ENCODE measurements at regions of chr2 and their contacts with region 1.

Region 1: GRCh38 chr2:75157430-75157829 is 41.9 kb downstream of the TACR1 start:
- DNase-seq: no peak
- H3K4me3 ChIP-seq: no peak overlapping the region
- H3K4me3 Mint-ChIP-seq: no peak overlapping the region
- H3K27ac Mint-ChIP-seq: no peak overlapping the region
- H3K4me1 ChIP-seq: peaks cover 20% of the 10 kb centered on the region
- H3K4me1 Mint-ChIP-seq: peaks cover 8% of the 10 kb centered on the region
- H3K27me3 ChIP-seq: no peaks in the 10 kb centered on the region
- H3K27me3 Mint-ChIP-seq: peaks cover 6% of the 10 kb centered on the region
- CTCF ChIP-seq: peak in 1 of 2 experiments; percentile 5

Region 2: GRCh38 chr2:75076088-75076487 is 81.3 kb before region 1 on chr2:
- CTCF ChIA-PET with region 1: no interaction called
- POLR2A ChIA-PET with region 1: no interaction called
- intact Hi-C with region 1: no loop called
- DNase-seq: no peak
- H3K4me3 ChIP-seq: no peak overlapping the region
- H3K4me3 Mint-ChIP-seq: no peak overlapping the region
- H3K27ac Mint-ChIP-seq: no peak overlapping the region
- H3K4me1 ChIP-seq: no peaks in the 10 kb centered on the region
- H3K4me1 Mint-ChIP-seq: no peaks in the 10 kb centered on the region
- H3K27me3 ChIP-seq: no peaks in the 10 kb centered on the region; the same call in 1 of the 2 replicates
- H3K27me3 Mint-ChIP-seq: no peaks in the 10 kb centered on the region
- CTCF ChIP-seq: no peak

Region 3: GRCh38 chr2:75098856-75099255 is 58.6 kb before region 1 on chr2:
- CTCF ChIA-PET with region 1: no interaction called
- POLR2A ChIA-PET with region 1: no interaction called
- intact Hi-C with region 1: loop called (anchors 2 kb)
- DNase-seq: peak in 1 of 2 experiments; percentile 30
- H3K4me3 ChIP-seq: no peak overlapping the region
- H3K4me3 Mint-ChIP-seq: no peak overlapping the region
- H3K27ac Mint-ChIP-seq: no peak overlapping the region
- H3K4me1 ChIP-seq: peaks cover 13% of the 10 kb centered on the region
- H3K4me1 Mint-ChIP-seq: peaks cover 34% of the 10 kb centered on the region
- H3K27me3 ChIP-seq: no peaks in the 10 kb centered on the region
- H3K27me3 Mint-ChIP-seq: no peaks in the 10 kb centered on the region
- CTCF ChIP-seq: peak; percentile 44 to 51

Region 4: DNA sequence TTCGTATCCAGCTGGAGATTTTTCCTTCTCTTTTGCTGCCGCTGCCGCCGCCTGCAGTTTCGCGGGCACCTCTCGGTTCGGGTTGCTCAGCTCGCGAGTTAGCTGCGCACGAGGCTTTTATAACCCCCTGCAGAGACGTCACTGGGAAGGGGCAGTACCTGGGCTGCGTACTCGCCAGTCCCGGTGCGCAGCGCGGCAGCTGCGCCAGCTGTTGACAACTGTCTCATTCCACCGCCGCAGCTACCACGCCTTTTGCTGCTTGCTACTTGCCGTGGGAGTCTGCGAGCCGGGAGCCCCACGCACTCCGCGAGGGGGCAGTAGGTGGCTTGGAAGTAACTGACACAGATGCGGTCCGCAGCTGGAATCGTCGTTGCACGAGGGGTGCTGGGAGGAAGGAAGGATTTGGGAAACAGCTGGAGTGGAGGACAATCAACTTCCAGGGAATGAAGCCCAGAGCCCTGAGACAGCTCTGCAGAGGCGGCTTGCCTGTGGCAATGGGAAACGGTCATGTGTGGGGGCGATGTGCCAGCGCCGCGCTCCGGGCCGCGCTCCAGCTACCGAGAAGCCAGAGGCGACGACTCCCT is 42.1 kb after region 1 on chr2 and contains the start of gene TACR1:
- CTCF ChIA-PET with region 1: interaction called, 3 read pairs
- POLR2A ChIA-PET with region 1: no interaction called
- intact Hi-C with region 1: loop called (anchors 5 kb)
- DNase-seq: peak; percentile 76 to 78
- H3K4me3 ChIP-seq: peak within 1 kb of the TSS; percentile 21
- H3K4me3 Mint-ChIP-seq: peak within 1 kb of the TSS; percentile 75
- H3K27ac Mint-ChIP-seq: no peak within 1 kb of the TSS
- H3K4me1 ChIP-seq: peaks cover 15% of the 10 kb centered on the region; the same call in 1 of the 2 replicates
- H3K4me1 Mint-ChIP-seq: peaks cover 6% of the 10 kb centered on the region
- H3K27me3 ChIP-seq: peaks cover 9% of the 10 kb centered on the region
- H3K27me3 Mint-ChIP-seq: peaks cover 18% of the 10 kb centered on the region
- CTCF ChIP-seq: peak; percentile 49 to 69
- total RNA-seq, gene TACR1: 0.07 TPM in 2 replicates

Region 5: GRCh38 chr2:75221862-75222261 is 64.4 kb after region 1 on chr2:
- CTCF ChIA-PET with region 1: no interaction called
- POLR2A ChIA-PET with region 1: no interaction called
- intact Hi-C with region 1: no loop called
- DNase-seq: no peak
- H3K4me3 ChIP-seq: no peak overlapping the region
- H3K4me3 Mint-ChIP-seq: no peak overlapping the region
- H3K27ac Mint-ChIP-seq: no peak overlapping the region
- H3K4me1 ChIP-seq: no peaks in the 10 kb centered on the region
- H3K4me1 Mint-ChIP-seq: no peaks in the 10 kb centered on the region
- H3K27me3 ChIP-seq: no peaks in the 10 kb centered on the region
- H3K27me3 Mint-ChIP-seq: peaks cover 30% of the 10 kb centered on the region
- CTCF ChIP-seq: no peak